ENCODE measurements at regions of chr2 and their contacts with region 1.

Region 1: GRCh38 chr2:98550165-98550564 is 58.1 kb downstream of the COA5 start:
- DNase-seq: no peak
- H3K4me3 ChIP-seq: no peak overlapping the region
- H3K27ac ChIP-seq: no peak overlapping the region
- H3K4me1 ChIP-seq: no peaks in the 10 kb centered on the region
- H3K27me3 ChIP-seq: no peaks in the 10 kb centered on the region
- CTCF ChIP-seq: no peak
- POLR2A ChIP-seq: no peak

Region 2: DNA sequence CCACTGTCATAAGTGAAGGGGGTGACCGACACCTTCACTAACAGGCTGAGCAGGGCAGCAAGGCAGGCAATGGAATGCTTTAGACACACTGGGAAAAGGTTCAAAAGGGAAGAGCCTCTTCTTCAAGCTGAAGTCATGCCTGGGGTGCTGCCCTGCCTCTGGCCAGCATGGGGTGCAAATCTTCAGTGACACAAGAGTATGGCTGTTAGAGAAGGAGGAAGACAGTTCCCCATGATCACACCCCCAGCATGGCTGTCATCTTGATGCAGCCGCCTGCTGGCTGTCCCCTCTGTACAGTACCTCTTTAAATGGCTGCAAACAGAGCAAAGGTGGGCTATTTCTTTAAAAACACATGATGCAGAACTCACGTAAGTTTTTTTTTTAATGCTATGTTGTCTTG is 33.6 kb before region 1 on chr2:
- intact Hi-C with region 1: loop called (anchors 1 kb)
- DNase-seq: no peak
- H3K4me3 ChIP-seq: no peak overlapping the region
- H3K27ac ChIP-seq: no peak overlapping the region
- H3K4me1 ChIP-seq: no peaks in the 10 kb centered on the region
- H3K27me3 ChIP-seq: no peaks in the 10 kb centered on the region
- CTCF ChIP-seq: no peak
- POLR2A ChIP-seq: no peak